Activated naive CD4-positive, alpha-beta T cell treated with anti-CD3 and anti-CD28 coated beads for 36 hours (primary cell): ENCODE measurements at regions of chr1 and their contacts with region 1.

Region 1: GRCh38 chr1:27772933-27773825 is at the start of gene STX12:
- DNase-seq: peak; percentile 100
- H3K4me3 Mint-ChIP-seq: peak within 1 kb of the TSS; percentile 90
- H3K27ac Mint-ChIP-seq: peak within 1 kb of the TSS; percentile 97
- H3K4me1 Mint-ChIP-seq: peaks cover 31% of the 10 kb centered on the region
- H3K27me3 Mint-ChIP-seq: no peaks in the 10 kb centered on the region
- total RNA-seq, gene STX12: 31.9 to 35.7 TPM

Region 2: GRCh38 chr1:27154991-27155781 is 618.0 kb before region 1 on chr1 and contains the start of gene SLC9A1:
- CTCF ChIA-PET with region 1: no interaction called
- intact Hi-C with region 1: loop called (anchors 2 kb)
- DNase-seq: peak; percentile 91
- H3K4me3 Mint-ChIP-seq: peak within 1 kb of the TSS; percentile 89
- H3K27ac Mint-ChIP-seq: peak within 1 kb of the TSS; percentile 98
- H3K4me1 Mint-ChIP-seq: peaks cover 47% of the 10 kb centered on the region
- H3K27me3 Mint-ChIP-seq: no peaks in the 10 kb centered on the region
- total RNA-seq, gene SLC9A1: 15.4 to 16.5 TPM

Region 3: GRCh38 chr1:27623327-27624212 is 149.6 kb before region 1 on chr1:
- CTCF ChIA-PET with region 1: no interaction called
- intact Hi-C with region 1: no loop called
- DNase-seq: no peak
- H3K4me3 Mint-ChIP-seq: no peak overlapping the region
- H3K27ac Mint-ChIP-seq: no peak overlapping the region
- H3K4me1 Mint-ChIP-seq: peaks cover 13% of the 10 kb centered on the region
- H3K27me3 Mint-ChIP-seq: no peaks in the 10 kb centered on the region

Region 4: DNA sequence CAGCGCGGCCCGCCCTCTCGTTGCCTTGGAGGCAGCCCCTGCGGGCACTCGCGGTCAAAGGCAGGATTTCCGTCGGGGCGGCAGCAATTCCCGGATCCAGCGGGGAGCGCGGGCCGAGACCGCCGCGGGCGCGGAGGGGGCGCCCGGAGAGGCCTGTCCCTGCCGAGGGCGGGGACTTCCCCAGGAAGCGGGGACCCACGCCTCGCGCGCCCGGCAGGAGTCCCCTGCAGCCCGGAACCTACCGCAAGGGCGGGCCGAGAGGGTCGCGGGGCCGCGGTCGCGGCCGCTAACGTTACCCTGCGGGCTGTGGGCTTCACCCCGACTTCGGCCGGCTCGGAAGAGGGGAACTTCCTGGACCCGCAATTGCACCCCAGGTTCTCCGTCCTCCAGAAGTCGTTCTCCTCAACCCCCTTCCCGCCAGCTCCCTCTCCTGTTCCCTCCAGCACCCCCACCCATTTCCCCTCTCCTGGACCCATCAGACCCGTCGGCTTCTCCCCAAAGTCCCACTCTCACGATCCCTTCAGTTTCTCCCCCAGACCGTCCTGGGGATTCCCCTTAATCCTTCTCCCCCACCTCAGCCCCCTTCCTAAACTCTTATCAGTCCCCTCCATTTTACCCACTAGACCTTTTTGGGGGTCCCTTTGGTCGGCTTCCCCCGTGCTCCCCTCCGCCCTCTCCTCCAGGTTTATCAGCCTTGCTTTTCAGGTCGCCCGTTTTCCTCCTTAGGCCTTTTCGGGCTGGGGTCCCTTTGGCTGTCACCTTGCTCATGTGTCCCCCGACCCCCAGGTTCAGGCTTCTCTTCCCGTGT is 138.8 kb before region 1 on chr1:
- CTCF ChIA-PET with region 1: no interaction called
- intact Hi-C with region 1: no loop called
- DNase-seq: peak; percentile 57
- H3K4me3 Mint-ChIP-seq: peak overlapping the region; percentile 46
- H3K27ac Mint-ChIP-seq: no peak overlapping the region
- H3K4me1 Mint-ChIP-seq: peaks cover 65% of the 10 kb centered on the region
- H3K27me3 Mint-ChIP-seq: no peaks in the 10 kb centered on the region

Region 5: DNA sequence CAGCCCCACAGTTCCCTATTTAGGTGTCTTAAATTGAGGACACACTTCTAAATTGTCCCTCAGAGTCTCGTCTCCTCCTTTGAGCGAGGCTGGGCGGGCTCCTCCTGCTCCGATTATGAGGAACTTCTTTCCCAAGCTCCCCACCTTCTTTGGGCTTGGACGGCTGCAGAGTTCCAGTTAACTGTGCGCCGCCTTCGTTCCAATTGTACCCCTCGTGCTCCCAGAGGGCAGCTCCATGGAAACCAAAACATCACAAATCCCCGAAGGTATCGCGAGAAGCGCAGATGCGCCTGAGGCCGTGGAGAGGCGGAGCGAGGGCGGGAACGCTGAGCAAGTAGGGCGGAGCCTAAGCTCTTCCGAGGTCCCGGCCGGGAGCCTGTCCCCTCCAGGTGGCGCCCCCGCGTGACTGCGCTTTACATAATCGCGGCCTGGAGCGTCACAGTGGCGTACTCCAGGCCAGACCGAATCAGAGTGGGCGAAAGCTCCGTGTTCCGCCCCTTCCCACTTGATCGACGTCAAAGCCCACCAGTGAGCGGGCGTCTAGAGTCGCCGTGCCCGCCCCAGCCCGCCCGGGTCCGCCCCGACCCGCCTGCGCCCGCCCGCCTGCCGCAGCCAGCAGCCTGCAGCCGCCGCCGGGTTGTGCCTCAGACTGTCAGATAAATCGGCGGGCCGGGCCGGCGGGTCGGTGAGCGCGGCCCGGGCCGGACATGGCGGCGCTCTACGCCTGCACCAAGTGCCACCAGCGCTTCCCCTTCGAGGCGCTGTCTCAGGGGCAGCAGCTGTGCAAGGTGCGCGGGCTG is 47.6 kb before region 1 on chr1 and contains the start of gene FAM76A:
- CTCF ChIA-PET with region 1: interaction called, 6 read pairs
- intact Hi-C with region 1: loop called (anchors 1 kb)
- DNase-seq: peak; percentile 100
- H3K4me3 Mint-ChIP-seq: peak within 1 kb of the TSS; percentile 86
- H3K27ac Mint-ChIP-seq: peak within 1 kb of the TSS; percentile 80
- H3K4me1 Mint-ChIP-seq: peaks cover 12% of the 10 kb centered on the region
- H3K27me3 Mint-ChIP-seq: no peaks in the 10 kb centered on the region
- total RNA-seq, gene FAM76A: 8.4 to 9.7 TPM

Region 6: DNA sequence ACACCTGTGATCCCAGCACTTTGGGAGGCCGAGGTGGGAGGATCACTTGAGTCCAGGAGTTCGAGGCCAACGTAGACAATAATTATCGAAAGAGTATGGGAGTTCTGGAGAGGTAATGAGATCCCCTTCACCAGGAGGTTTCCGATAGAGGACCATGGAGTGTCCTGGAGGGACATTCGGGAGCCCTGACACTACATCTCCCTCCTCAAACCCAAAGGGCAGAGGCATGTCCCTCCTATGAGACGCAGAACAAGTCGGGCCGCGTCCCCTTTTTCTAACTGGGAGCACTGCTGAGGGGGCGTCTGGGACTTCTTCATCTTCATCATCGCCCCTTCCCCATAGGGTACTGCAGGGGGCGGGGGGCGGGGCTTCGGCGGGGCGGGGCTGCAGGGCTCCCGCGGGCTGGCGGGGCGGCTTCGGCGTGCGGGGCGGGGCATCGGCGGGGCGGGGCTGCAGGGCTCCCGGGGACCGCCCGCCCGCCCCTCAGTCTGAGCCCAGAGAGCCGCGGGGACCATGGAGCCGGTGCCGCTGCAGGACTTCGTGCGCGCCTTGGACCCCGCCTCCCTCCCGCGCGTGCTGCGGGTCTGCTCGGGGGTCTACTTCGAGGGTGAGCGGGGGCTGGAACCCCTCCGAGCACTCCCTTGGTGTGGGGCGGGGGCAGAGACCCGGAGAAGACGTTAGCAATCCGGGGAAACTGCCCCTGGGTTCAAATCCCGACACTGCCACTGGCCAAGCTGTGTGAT is 99.1 kb after region 1 on chr1 and contains the start of gene THEMIS2:
- CTCF ChIA-PET with region 1: no interaction called
- intact Hi-C with region 1: loop called (anchors 5 kb)
- DNase-seq: peak; percentile 81
- H3K4me3 Mint-ChIP-seq: peak within 1 kb of the TSS; percentile 86
- H3K27ac Mint-ChIP-seq: peak within 1 kb of the TSS; percentile 74
- H3K4me1 Mint-ChIP-seq: peaks cover 51% of the 10 kb centered on the region
- H3K27me3 Mint-ChIP-seq: no peaks in the 10 kb centered on the region
- total RNA-seq, gene THEMIS2: 12.9 to 17.5 TPM

Region 7: GRCh38 chr1:28259307-28260167 is 486.4 kb after region 1 on chr1 and contains the start of gene SESN2:
- CTCF ChIA-PET with region 1: no interaction called
- intact Hi-C with region 1: loop called (anchors 5 kb)
- DNase-seq: peak; percentile 100
- H3K4me3 Mint-ChIP-seq: peak within 1 kb of the TSS; percentile 68
- H3K27ac Mint-ChIP-seq: peak within 1 kb of the TSS; percentile 94
- H3K4me1 Mint-ChIP-seq: peaks cover 45% of the 10 kb centered on the region
- H3K27me3 Mint-ChIP-seq: no peaks in the 10 kb centered on the region
- total RNA-seq, gene SESN2: 46.2 to 46.9 TPM

Region 8: DNA sequence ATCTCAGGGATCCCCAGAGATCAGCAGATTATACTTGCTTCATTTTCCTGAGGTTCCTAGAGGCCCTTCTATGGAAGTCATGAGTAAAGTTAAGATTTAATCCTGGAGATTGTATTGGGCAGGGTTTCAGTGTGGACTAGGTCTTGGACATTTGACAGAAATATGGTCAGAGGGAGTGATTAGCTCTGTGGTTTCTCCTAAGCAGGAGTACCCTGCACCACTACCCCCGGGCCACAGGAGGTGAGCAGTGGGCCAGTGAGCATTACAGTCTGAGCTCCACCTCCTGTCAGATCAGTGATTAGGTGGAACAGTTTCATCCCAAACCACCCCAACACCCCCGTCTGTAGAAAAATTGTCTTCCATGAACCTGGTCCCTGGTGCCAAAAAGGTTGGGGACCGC is 639.6 kb after region 1 on chr1:
- CTCF ChIA-PET with region 1: no interaction called
- intact Hi-C with region 1: no loop called
- DNase-seq: no peak
- H3K4me3 Mint-ChIP-seq: no peak overlapping the region
- H3K27ac Mint-ChIP-seq: no peak overlapping the region
- H3K4me1 Mint-ChIP-seq: peaks cover 12% of the 10 kb centered on the region
- H3K27me3 Mint-ChIP-seq: no peaks in the 10 kb centered on the region